ENCODE measurements at regions of chr4 and their contacts with region 1.

Region 1: GRCh38 chr4:176319704-176320339 is at the start of gene SPCS3:
- DNase-seq: peak; percentile 96
- H3K4me3 Mint-ChIP-seq: peak within 1 kb of the TSS; percentile 76
- H3K27ac Mint-ChIP-seq: peak within 1 kb of the TSS; percentile 74
- H3K4me1 Mint-ChIP-seq: peaks cover 6% of the 10 kb centered on the region
- H3K27me3 Mint-ChIP-seq: no peaks in the 10 kb centered on the region
- CTCF ChIP-seq: no peak
- total RNA-seq, gene SPCS3: 126 and 169 TPM in 2 replicates

Region 2: GRCh38 chr4:175944126-175944910 is 375.5 kb before region 1 on chr4:
- CTCF ChIA-PET with region 1: no interaction called
- POLR2A ChIA-PET with region 1: no interaction called
- intact Hi-C with region 1: no loop called
- DNase-seq: no peak
- H3K4me3 Mint-ChIP-seq: no peak overlapping the region
- H3K27ac Mint-ChIP-seq: no peak overlapping the region
- H3K4me1 Mint-ChIP-seq: no peaks in the 10 kb centered on the region
- H3K27me3 Mint-ChIP-seq: no peaks in the 10 kb centered on the region
- CTCF ChIP-seq: no peak

Region 3: DNA sequence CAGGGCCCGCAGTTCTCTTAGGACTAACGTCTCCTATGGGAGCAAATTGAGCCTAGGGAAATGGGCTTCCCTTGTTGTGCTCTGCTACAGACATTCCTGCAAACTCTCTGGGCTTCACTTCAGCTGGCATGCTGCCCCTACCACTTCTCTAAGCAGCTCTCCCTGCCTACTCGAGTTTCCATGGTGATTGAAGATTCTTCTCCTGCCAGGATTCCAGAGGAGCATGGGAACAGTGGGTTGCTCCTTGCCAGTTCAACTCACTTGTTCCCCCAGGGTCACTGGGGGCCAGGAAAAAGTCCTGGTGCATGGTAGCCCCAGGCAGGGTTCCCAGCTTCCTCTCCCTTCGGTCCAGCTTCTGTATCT is 275.3 kb before region 1 on chr4:
- CTCF ChIA-PET with region 1: no interaction called
- POLR2A ChIA-PET with region 1: no interaction called
- intact Hi-C with region 1: no loop called
- DNase-seq: no peak
- H3K4me3 Mint-ChIP-seq: no peak overlapping the region
- H3K27ac Mint-ChIP-seq: no peak overlapping the region
- H3K4me1 Mint-ChIP-seq: peaks cover 5% of the 10 kb centered on the region
- H3K27me3 Mint-ChIP-seq: no peaks in the 10 kb centered on the region
- CTCF ChIP-seq: no peak

Region 4: DNA sequence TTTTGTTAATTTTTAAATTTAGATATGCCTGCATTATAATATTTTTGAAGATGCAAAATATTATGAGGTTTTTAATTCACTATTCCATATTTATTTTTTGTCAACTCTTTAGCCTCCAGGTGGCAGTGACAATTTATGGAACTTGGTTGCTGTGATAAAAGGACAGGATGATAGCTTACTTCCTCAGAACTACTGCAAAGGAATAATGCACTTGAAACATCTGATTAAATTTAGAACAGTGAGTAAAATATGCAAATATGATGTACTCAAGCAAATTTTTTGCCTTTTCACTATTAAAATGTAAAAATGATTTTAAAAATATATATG is 169.5 kb before region 1 on chr4:
- CTCF ChIA-PET with region 1: interaction called, 3 read pairs
- POLR2A ChIA-PET with region 1: no interaction called
- intact Hi-C with region 1: loop called (anchors 5 kb)
- DNase-seq: peak; percentile 48
- H3K4me3 Mint-ChIP-seq: no peak overlapping the region
- H3K27ac Mint-ChIP-seq: no peak overlapping the region
- H3K4me1 Mint-ChIP-seq: no peaks in the 10 kb centered on the region
- H3K27me3 Mint-ChIP-seq: no peaks in the 10 kb centered on the region
- CTCF ChIP-seq: peak; percentile 37

Region 5: GRCh38 chr4:176195184-176195978 is 124.4 kb before region 1 on chr4 and contains the start of gene SPATA4:
- CTCF ChIA-PET with region 1: no interaction called
- POLR2A ChIA-PET with region 1: interaction called, 7 read pairs
- intact Hi-C with region 1: loop called (anchors 2 kb)
- DNase-seq: peak; percentile 87
- H3K4me3 Mint-ChIP-seq: peak within 1 kb of the TSS; percentile 89
- H3K27ac Mint-ChIP-seq: peak within 1 kb of the TSS; percentile 98
- H3K4me1 Mint-ChIP-seq: peaks cover 7% of the 10 kb centered on the region
- H3K27me3 Mint-ChIP-seq: no peaks in the 10 kb centered on the region
- CTCF ChIP-seq: no peak
- total RNA-seq, gene SPATA4: 0.21 and 0.44 TPM in 2 replicates

Region 6: DNA sequence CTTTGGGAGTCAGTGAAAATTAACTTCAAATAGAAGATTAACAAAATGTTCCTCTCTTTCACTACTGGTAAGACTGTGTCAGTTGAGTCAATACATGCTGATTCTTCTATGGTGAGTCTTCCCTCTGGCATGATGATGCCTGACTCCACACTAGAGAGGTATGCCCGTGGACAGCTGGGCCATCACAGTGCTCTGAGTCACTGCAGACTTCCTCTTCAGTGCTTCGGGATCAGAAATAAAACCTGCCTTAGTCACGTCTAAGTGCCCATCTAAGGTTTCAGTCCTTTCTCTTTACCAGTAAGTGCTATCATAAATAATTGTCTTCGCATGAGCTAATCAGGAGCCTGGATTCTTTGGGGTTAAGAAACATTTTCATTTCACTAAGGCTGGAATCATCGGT is 49.2 kb before region 1 on chr4:
- CTCF ChIA-PET with region 1: no interaction called
- POLR2A ChIA-PET with region 1: interaction called, 6 read pairs
- intact Hi-C with region 1: loop called (anchors 2 kb)
- DNase-seq: peak; percentile 93
- H3K4me3 Mint-ChIP-seq: no peak overlapping the region
- H3K27ac Mint-ChIP-seq: no peak overlapping the region
- H3K4me1 Mint-ChIP-seq: peaks cover 18% of the 10 kb centered on the region
- H3K27me3 Mint-ChIP-seq: no peaks in the 10 kb centered on the region
- CTCF ChIP-seq: no peak

Region 7: GRCh38 chr4:176302283-176303275 is 17.2 kb before region 1 on chr4:
- CTCF ChIA-PET with region 1: interaction called, 3 read pairs
- POLR2A ChIA-PET with region 1: interaction called, 14 read pairs
- intact Hi-C with region 1: no loop called
- DNase-seq: peak; percentile 62
- H3K4me3 Mint-ChIP-seq: no peak overlapping the region
- H3K27ac Mint-ChIP-seq: no peak overlapping the region
- H3K4me1 Mint-ChIP-seq: no peaks in the 10 kb centered on the region
- H3K27me3 Mint-ChIP-seq: no peaks in the 10 kb centered on the region
- CTCF ChIP-seq: no peak

Region 8: GRCh38 chr4:176308441-176308840 is 11.4 kb before region 1 on chr4:
- CTCF ChIA-PET with region 1: interaction called, 3 read pairs
- POLR2A ChIA-PET with region 1: interaction called, 12 read pairs
- intact Hi-C with region 1: no loop called
- DNase-seq: no peak
- H3K4me3 Mint-ChIP-seq: no peak overlapping the region
- H3K27ac Mint-ChIP-seq: no peak overlapping the region
- H3K4me1 Mint-ChIP-seq: no peaks in the 10 kb centered on the region
- H3K27me3 Mint-ChIP-seq: no peaks in the 10 kb centered on the region
- CTCF ChIP-seq: no peak

Region 9: DNA sequence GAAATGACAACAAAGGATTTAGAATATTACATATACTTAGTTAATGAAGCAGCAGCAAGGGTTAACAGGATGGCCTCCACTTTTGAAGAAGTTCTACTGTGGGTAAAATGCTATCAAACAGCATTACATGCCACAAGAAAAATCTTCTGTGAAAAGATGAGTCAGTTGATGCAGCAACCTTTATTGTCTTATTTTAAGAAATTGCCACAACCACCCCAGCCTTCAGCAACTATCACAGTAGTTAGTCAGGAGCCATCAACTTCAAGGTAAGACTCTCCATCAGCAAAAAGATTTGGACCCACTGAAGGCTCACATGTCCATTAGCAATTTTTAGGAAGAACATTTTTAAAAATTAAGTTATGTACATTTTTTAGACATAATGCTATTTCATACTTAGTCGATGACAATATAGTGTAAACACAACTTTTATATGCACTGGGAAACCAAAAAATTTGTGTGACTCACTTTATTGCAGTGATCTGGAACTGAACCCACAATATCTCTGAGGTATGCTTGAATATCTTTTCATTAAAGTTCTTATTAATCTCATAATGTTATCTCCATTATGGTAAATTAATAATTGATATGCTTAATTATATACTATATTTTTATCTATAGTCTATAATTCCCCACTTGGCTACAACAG is 81.1 kb after region 1 on chr4:
- CTCF ChIA-PET with region 1: no interaction called
- POLR2A ChIA-PET with region 1: no interaction called
- intact Hi-C with region 1: no loop called
- DNase-seq: peak; percentile 51
- H3K4me3 Mint-ChIP-seq: no peak overlapping the region
- H3K27ac Mint-ChIP-seq: peak overlapping the region; percentile 43
- H3K4me1 Mint-ChIP-seq: peaks cover 13% of the 10 kb centered on the region
- H3K27me3 Mint-ChIP-seq: no peaks in the 10 kb centered on the region
- CTCF ChIP-seq: no peak

Region 10: GRCh38 chr4:177759716-177760115 is 1439.9 kb after region 1 on chr4:
- CTCF ChIA-PET with region 1: no interaction called
- POLR2A ChIA-PET with region 1: no interaction called
- intact Hi-C with region 1: no loop called
- DNase-seq: peak; percentile 11
- H3K4me3 Mint-ChIP-seq: no peak overlapping the region
- H3K27ac Mint-ChIP-seq: no peak overlapping the region
- H3K4me1 Mint-ChIP-seq: peaks cover 6% of the 10 kb centered on the region
- H3K27me3 Mint-ChIP-seq: no peaks in the 10 kb centered on the region
- CTCF ChIP-seq: no peak

Measured in MCF 10A (cell line).